ENCODE measurements at regions of chr9 and their contacts with region 1.

Region 1: DNA sequence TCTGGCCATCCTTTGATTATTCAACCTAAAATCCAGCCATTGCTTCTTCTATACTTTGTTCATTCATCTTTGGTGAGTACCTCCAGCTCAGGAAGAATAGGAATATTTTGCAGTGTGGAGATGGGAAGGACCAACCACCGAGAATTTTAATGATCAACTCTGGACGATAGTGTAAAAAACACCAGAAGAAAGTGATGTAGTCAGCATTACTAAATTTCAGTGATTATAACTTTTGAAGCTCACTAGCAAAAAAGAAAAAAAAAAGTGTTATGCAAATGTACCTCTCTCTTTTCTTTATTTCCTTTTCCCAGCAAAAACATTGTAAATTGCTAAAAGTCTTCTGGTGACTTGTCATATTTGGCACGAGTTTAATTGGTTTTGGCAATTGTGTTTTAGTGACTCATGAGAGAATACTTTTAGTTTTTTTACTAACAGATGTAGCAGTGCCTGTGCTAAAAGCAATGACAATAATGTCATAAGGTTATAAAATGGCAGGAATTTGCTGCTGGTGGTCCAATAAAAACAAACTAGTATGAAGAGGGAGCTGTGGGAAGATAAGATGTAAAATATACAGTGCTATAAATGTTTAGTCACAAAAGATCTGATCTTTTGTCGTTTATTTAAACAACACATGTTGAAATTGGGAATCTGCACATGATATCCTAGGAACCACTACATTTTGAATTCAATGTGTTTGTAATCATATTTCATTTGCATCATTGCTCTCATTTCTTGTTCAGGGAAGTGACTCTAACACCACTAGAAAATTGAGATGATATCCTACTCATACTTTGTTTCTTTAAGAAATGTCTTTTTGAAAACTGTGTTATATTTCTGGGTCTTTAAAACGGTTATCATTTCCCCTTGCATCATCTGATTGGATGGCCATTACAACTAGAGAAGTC is 81.3 kb upstream of the ERCC6L2 start:
- DNase-seq: peak in 1 of 2 experiments; percentile 64
- H3K4me3 ChIP-seq: no peak overlapping the region
- H3K27ac ChIP-seq: no peak overlapping the region
- H3K4me1 ChIP-seq: no peaks in the 10 kb centered on the region
- H3K27me3 ChIP-seq: no peaks in the 10 kb centered on the region
- CTCF ChIP-seq: no peak

Region 2: GRCh38 chr9:95840074-95840473 is 45.9 kb after region 1 on chr9:
- CTCF ChIA-PET with region 1: no interaction called
- POLR2A ChIA-PET with region 1: no interaction called
- intact Hi-C with region 1: loop called (anchors 1 kb)
- DNase-seq: no peak
- H3K4me3 ChIP-seq: no peak overlapping the region
- H3K27ac ChIP-seq: no peak overlapping the region
- H3K4me1 ChIP-seq: no peaks in the 10 kb centered on the region
- H3K27me3 ChIP-seq: no peaks in the 10 kb centered on the region
- CTCF ChIP-seq: no peak

Region 3: DNA sequence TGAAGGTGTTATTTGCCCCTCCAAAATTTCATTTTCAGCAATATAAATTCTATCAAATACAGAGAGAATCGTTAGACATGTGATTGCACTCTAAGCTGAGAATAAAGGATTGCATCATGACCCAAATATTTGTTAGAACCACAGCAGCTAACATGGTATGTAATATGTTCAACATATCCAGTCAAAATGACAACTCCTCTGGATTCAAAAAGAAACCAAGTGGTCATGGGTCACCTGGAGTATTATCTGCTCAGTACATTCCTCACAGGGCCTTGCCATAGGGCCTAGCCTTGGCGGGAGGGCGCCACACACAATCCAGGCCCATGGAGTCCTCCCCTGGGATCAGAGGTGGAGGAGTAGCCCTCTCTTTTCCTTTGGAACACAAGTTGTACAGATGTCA is 328.6 kb after region 1 on chr9:
- CTCF ChIA-PET with region 1: no interaction called
- POLR2A ChIA-PET with region 1: no interaction called
- intact Hi-C with region 1: no loop called
- DNase-seq: no peak
- H3K4me3 ChIP-seq: no peak overlapping the region
- H3K27ac ChIP-seq: no peak overlapping the region
- H3K4me1 ChIP-seq: no peaks in the 10 kb centered on the region
- H3K27me3 ChIP-seq: peaks cover 32% of the 10 kb centered on the region; the same call in 1 of the 2 replicates
- CTCF ChIP-seq: no peak

Measured in PC-9 (cell line).